ENCODE measurements at regions of chr11 and their contacts with region 1.

Region 1: DNA sequence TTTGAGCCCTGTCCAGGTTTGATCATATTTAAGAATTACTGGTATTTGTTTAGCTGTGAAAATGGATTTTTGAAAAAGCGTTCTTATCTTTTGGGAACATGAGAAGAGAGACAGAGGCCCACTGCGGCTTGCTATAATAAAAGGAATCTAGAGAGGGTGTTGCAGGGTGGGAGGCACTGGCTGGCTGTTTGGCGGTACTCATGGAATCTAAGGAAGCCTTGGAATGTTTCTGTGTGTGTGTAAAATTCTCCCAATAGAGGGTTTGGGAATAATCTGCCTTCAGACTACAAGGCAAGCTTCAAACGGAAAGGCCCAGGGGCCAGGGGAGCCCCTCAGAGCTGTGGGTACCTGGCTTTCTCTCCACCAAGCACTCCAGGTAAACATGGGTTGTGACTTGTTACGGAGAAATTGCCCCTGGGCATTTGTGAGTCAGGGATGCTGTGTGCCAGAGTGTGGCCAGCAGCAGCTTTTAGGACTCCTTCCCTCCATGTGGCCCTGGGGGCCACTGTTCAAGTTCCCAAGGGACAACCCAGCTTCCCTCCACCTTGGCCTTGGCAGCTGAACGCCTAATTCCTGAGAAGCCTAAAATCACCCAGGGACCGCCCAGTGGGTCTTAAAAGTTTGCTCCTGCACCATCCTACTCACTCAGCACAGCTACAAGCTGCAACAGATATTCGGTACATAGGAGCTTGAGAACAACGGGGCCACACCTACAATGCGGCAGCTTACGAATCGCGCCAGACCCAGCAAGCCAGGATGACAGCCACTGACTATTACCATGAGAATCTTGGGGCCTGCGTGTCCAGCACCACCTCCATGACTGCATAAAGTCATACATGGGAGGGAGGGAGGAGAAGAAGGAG is 14.1 kb upstream of the SYT8 start:
- DNase-seq: no peak
- H3K4me3 ChIP-seq: no peak overlapping the region
- H3K27ac ChIP-seq: no peak overlapping the region
- H3K4me1 ChIP-seq: no peaks in the 10 kb centered on the region
- H3K27me3 ChIP-seq: peaks cover 0 to 23% (median 0%) of the 10 kb centered on the region in 4 donors
- CTCF ChIP-seq: no peak
- EP300 ChIP-seq: no peak
- POLR2A ChIP-seq: no peak

Region 2: GRCh38 chr11:1706634-1707400 is 113.9 kb before region 1 on chr11:
- intact Hi-C with region 1: loop called (anchors 5 kb)
- DNase-seq: no peak
- H3K4me3 ChIP-seq: no peak overlapping the region
- H3K27ac ChIP-seq: no peak overlapping the region
- H3K4me1 ChIP-seq: no peaks in the 10 kb centered on the region
- H3K27me3 ChIP-seq: peaks cover 0 to 38% (median 0%) of the 10 kb centered on the region in 4 donors
- CTCF ChIP-seq: peak in 1 of 3 experiments; percentile 25
- EP300 ChIP-seq: no peak
- POLR2A ChIP-seq: no peak

Region 3: GRCh38 chr11:1717745-1718144 is 102.9 kb before region 1 on chr11:
- intact Hi-C with region 1: no loop called
- DNase-seq: no peak
- H3K4me3 ChIP-seq: no peak overlapping the region
- H3K27ac ChIP-seq: no peak overlapping the region
- H3K4me1 ChIP-seq: no peaks in the 10 kb centered on the region
- H3K27me3 ChIP-seq: peaks cover 0 to 58% (median 0%) of the 10 kb centered on the region in 4 donors
- CTCF ChIP-seq: no peak
- EP300 ChIP-seq: no peak
- POLR2A ChIP-seq: no peak

Measured in esophagus muscularis mucosa (tissue), 4 donors.